ENCODE measurements at regions of chr15 and their contacts with region 1.

Region 1: DNA sequence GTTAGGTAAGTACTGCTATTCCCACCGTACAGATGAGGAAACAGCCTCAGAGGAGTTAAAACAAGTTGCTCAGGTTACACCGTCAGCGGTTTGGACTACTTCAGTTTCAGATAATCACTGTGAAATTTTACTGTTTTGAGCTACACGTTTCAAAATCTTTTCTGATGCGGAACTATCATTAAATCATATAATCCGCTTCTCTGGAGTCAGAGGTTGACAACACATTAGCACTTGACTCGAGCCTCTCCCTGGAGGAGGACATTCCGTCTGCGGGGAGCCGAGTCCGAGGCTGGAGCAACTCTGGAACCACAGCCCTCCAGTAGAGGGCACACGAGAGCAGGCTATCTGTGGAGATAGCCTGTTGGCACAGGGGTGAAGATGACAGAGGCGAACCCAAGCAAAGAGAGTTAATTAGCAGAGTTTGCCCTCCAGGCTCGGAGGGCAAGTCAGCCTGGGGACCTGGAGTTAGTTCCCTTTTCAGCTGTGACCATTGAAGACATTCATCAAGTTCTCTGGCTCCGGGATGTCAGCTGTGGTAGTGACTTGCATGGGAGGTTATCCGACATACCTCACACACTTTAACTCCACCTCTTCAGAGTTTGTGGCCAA is 131.2 kb downstream of the IGF1R start:
- DNase-seq: peak; percentile 83 to 84
- ATAC-seq: peak; percentile 80 to 92 (median 90)
- H3K4me3 ChIP-seq: no peak overlapping the region
- H3K27ac ChIP-seq: peak overlapping the region in 7 of 10 donors; percentile 6 to 56 (median 30)
- H3K4me1 ChIP-seq: peaks cover 0 to 51% (median 42%) of the 10 kb centered on the region in 9 donors
- H3K27me3 ChIP-seq: no peaks in the 10 kb centered on the region
- CTCF ChIP-seq: peak; percentile 82 to 97 (median 95)

Region 2: GRCh38 chr15:98658831-98659699 is 120.5 kb before region 1 on chr15:
- intact Hi-C with region 1: loop called in 6 of 10 experiments (anchors 5 to 10 kb)
- DNase-seq: peak in 1 of 2 donors; percentile 56
- ATAC-seq: peak; percentile 53 to 84 (median 65)
- H3K4me3 ChIP-seq: no peak overlapping the region
- H3K27ac ChIP-seq: no peak overlapping the region
- H3K4me1 ChIP-seq: peaks cover 8 to 89% (median 65%) of the 10 kb centered on the region in 9 donors
- H3K27me3 ChIP-seq: no peaks in the 10 kb centered on the region
- CTCF ChIP-seq: peak; percentile 62 to 91 (median 81)

Region 3: DNA sequence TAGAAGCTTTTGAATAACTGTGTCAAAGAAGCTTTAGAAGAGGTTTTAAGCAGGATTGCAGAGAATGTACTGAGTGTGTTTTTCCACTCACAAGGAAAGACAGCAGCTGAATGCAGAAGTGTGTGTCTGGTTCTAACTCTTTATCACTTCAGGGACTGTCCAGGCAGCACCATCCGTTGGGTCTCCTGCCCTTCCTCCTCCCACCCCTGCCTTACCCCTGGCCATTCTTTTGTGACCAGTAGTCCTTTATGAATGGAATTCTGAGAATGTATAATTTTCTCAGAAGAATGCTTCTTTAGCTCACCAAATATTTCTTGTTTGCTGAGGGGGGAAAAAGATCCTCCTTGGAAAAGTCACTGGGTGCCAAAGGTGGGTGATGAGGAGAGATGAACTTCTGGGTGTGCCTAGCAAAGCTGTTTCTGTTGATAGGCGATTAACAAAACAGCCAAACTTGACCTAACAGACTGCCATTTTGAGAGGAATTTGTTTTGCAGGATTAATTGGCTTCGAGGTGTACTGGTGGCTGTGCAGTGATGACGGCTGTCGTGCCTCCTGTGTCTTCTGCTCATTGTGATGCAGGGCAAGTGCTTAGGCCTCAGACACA is 60.3 kb before region 1 on chr15:
- intact Hi-C with region 1: loop called in 1 of 10 experiments (anchors 5 kb)
- DNase-seq: no peak
- ATAC-seq: peak in 2 of 8 donors; percentile 31 to 44
- H3K4me3 ChIP-seq: no peak overlapping the region
- H3K27ac ChIP-seq: peak overlapping the region; percentile 24 to 87 (median 68)
- H3K4me1 ChIP-seq: peaks cover 19 to 99% (median 71%) of the 10 kb centered on the region in 9 donors
- H3K27me3 ChIP-seq: no peaks in the 10 kb centered on the region
- CTCF ChIP-seq: no peak

Region 4: DNA sequence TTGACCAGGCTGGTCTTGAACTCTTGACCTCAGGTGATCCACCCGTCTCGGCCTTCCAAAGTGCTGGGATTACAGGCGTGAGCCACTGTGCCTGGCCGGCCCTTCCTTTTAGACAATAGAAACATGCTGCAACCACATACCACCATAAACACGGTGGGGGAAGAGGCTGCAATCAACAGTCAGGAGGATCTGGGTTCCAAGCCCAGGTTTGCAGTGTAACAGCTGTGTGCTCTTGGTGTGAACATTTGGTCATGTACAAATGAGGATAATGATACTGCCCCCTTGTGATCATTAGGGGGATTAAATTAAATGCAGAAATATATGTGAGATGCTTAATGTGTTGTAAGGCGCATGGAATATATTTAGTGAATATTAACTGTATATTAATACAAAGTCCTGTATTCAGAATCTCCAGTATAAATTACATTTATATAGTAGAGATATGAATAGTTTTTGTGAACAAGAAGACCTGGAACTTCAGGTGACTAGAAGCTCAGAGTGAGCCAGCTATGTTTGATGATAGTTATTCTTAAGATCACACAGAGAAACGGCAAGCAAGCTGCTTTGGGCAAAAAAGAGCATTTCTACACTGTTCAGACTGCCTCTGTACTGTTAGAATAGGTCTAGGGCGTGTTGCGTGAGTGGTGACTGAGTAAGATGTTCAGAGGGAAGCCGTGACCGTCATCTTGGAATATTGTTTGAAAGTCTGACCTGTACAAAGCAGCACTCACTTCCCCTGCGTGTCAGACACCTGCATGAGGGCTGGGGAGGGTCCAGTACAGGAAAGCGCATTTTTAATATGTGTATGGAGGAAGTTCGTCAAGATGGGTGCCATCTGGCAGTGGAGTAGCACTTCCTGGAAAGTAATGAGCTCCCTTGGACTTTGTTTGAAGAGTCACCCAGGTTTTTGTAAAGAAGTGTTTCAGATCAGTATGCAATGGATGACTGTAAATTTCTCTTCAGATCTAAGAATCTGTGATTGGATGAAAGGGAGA is 102.3 kb after region 1 on chr15:
- intact Hi-C with region 1: loop called in 1 of 10 experiments (anchors 2 kb)
- DNase-seq: no peak
- ATAC-seq: peak in 3 of 8 donors; percentile 35 to 54 (median 41)
- H3K4me3 ChIP-seq: no peak overlapping the region
- H3K27ac ChIP-seq: no peak overlapping the region
- H3K4me1 ChIP-seq: peaks cover 8 to 81% (median 56%) of the 10 kb centered on the region in 9 donors
- H3K27me3 ChIP-seq: no peaks in the 10 kb centered on the region
- CTCF ChIP-seq: peak; percentile 30 to 75 (median 63)

Region 5: DNA sequence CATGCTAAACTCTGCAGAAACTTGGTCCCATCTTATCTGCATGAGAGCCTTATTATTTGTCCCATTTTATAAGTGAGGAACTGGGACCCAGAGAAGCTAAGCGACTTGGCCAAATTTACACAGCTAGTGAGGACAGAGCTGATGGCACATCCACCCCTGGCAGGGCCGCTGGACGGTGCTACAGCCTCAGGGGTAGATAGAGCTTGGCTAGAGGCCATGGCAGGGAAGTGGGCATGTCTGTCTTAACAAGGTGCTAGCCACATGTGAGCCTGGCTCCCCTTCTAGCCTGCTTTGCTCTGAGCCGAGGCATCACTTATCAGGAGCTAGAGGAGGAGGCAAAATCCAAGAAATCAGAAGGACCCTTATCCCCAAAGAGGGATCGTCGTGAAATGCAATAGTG is 288.6 kb after region 1 on chr15:
- intact Hi-C with region 1: loop called in 5 of 10 experiments (anchors 10 kb)
- DNase-seq: no peak
- ATAC-seq: no peak
- H3K4me3 ChIP-seq: no peak overlapping the region
- H3K27ac ChIP-seq: no peak overlapping the region
- H3K4me1 ChIP-seq: peaks cover 0 to 2% (median 0%) of the 10 kb centered on the region in 9 donors
- H3K27me3 ChIP-seq: no peaks in the 10 kb centered on the region
- CTCF ChIP-seq: no peak

Region 6: GRCh38 chr15:100043015-100043641 is 1263.6 kb after region 1 on chr15:
- intact Hi-C with region 1: no loop called
- DNase-seq: no peak
- ATAC-seq: peak in 3 of 8 donors; percentile 40 to 69 (median 48)
- H3K4me3 ChIP-seq: no peak overlapping the region
- H3K27ac ChIP-seq: peak overlapping the region in 5 of 10 donors; percentile 17 to 45 (median 38)
- H3K4me1 ChIP-seq: peaks cover 0 to 14% (median 4%) of the 10 kb centered on the region in 9 donors
- H3K27me3 ChIP-seq: no peaks in the 10 kb centered on the region
- CTCF ChIP-seq: no peak